ENCODE measurements at regions of chr4 and their contacts with region 1.

Region 1: DNA sequence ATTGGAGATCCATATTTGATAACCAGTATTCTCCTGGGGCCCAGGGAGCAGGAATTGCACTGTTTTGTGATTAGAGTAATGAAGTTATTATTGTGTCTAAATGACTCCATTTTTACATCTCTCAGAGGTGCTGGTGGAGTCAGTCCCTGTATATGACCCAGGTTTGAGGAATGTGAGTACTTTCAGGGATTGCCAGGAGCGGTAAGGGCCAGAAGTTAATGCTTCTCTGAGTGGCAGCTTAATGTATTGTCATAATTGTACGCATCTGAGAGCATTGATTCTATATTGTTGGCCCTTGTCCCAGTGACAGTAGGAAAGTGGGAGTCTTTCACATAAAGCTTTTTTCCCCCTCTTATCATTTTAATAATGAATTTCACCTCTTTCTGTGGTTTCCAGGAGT is 146.2 kb downstream of the GATB start:
- H3K4me3 ChIP-seq: no peak overlapping the region
- H3K27ac ChIP-seq: no peak overlapping the region
- H3K4me1 ChIP-seq: no peaks in the 10 kb centered on the region
- CTCF ChIP-seq: no peak

Region 2: DNA sequence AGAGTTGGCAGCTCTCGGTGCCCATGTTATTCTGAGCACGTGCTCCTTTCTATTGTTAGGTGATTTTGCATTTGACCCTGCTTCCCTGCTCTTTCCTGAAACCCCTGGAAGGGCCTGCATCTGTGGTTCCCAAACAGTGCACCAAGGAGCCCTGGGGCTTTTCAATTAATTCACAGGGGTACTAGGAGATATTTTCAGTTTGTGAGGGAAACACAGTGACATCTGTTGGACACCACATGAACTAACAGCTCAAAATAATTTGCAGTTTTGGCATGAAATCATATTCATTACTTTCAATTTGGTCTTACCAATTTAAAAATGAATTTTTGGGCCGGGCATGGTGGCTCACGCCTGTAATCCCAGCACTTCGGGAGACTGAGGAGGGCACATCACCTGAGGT is 10.3 kb before region 1 on chr4:
- CTCF ChIA-PET with region 1: interaction called, 10 read pairs
- POLR2A ChIA-PET with region 1: no interaction called
- H3K4me3 ChIP-seq: no peak overlapping the region
- H3K27ac ChIP-seq: no peak overlapping the region
- H3K4me1 ChIP-seq: no peaks in the 10 kb centered on the region
- CTCF ChIP-seq: no peak

Measured in HEK293 (cell line).